Psoas muscle (tissue), 8 donors: ENCODE measurements at regions of chr4 and their contacts with region 1.

Region 1: GRCh38 chr4:107913281-107913899 is 18.0 kb upstream of the CYP2U1 start:
- DNase-seq: no peak
- ATAC-seq: peak; percentile 79 to 93 (median 88)
- H3K4me3 ChIP-seq: no peak overlapping the region
- H3K27ac ChIP-seq: no peak overlapping the region
- H3K4me1 ChIP-seq: no peaks in the 10 kb centered on the region
- H3K27me3 ChIP-seq: no peaks in the 10 kb centered on the region
- CTCF ChIP-seq: peak; percentile 88

Region 2: GRCh38 chr4:107757864-107758476 is 155.4 kb before region 1 on chr4:
- intact Hi-C with region 1: loop called (anchors 1 to 2 kb)
- DNase-seq: no peak
- ATAC-seq: peak in 2 of 4 donors; percentile 66 to 76
- H3K4me3 ChIP-seq: no peak overlapping the region
- H3K27ac ChIP-seq: no peak overlapping the region
- H3K4me1 ChIP-seq: no peaks in the 10 kb centered on the region
- H3K27me3 ChIP-seq: no peaks in the 10 kb centered on the region
- CTCF ChIP-seq: peak; percentile 71